T-cell (primary cell): ENCODE measurements at regions of chr4 and their contacts with region 1.

Region 1: GRCh38 chr4:54233277-54233696 is 4.2 kb downstream of the PDGFRA start:
- DNase-seq: peak; percentile 19 to 79 (median 57)
- ATAC-seq: peak; percentile 73 to 87 (median 76)
- H3K4me3 ChIP-seq: peak overlapping the region; percentile 32 to 67
- H3K4me3 Mint-ChIP-seq: peak overlapping the region; percentile 76 to 82 (median 78)
- H3K27ac ChIP-seq: no peak overlapping the region
- H3K27ac Mint-ChIP-seq: no peak overlapping the region
- H3K4me1 ChIP-seq: peaks cover 6 to 40% of the 10 kb centered on the region in 2 experiments
- H3K4me1 Mint-ChIP-seq: peaks cover 25 to 30% (median 30%) of the 10 kb centered on the region in 3 donors
- H3K27me3 ChIP-seq: peaks cover 12 to 65% of the 10 kb centered on the region in 2 experiments
- H3K27me3 Mint-ChIP-seq: peaks cover 45 to 61% of the 10 kb centered on the region in 2 donors

Region 2: GRCh38 chr4:52376132-52376704 is 1857.1 kb before region 1 on chr4:
- CTCF ChIA-PET with region 1: interaction called, 4 to 12 read pairs
- POLR2A ChIA-PET with region 1: no interaction called
- DNase-seq: peak in 6 of 35 experiments; percentile 1 to 49 (median 3)
- ATAC-seq: no peak
- H3K4me3 ChIP-seq: no peak overlapping the region
- H3K4me3 Mint-ChIP-seq: no peak overlapping the region
- H3K27ac ChIP-seq: no peak overlapping the region
- H3K27ac Mint-ChIP-seq: no peak overlapping the region
- H3K4me1 ChIP-seq: no peaks in the 10 kb centered on the region
- H3K4me1 Mint-ChIP-seq: no peaks in the 10 kb centered on the region
- H3K27me3 ChIP-seq: peaks cover 0 to 16% of the 10 kb centered on the region in 2 experiments
- H3K27me3 Mint-ChIP-seq: peaks cover 20 to 23% of the 10 kb centered on the region in 2 donors

Region 3: DNA sequence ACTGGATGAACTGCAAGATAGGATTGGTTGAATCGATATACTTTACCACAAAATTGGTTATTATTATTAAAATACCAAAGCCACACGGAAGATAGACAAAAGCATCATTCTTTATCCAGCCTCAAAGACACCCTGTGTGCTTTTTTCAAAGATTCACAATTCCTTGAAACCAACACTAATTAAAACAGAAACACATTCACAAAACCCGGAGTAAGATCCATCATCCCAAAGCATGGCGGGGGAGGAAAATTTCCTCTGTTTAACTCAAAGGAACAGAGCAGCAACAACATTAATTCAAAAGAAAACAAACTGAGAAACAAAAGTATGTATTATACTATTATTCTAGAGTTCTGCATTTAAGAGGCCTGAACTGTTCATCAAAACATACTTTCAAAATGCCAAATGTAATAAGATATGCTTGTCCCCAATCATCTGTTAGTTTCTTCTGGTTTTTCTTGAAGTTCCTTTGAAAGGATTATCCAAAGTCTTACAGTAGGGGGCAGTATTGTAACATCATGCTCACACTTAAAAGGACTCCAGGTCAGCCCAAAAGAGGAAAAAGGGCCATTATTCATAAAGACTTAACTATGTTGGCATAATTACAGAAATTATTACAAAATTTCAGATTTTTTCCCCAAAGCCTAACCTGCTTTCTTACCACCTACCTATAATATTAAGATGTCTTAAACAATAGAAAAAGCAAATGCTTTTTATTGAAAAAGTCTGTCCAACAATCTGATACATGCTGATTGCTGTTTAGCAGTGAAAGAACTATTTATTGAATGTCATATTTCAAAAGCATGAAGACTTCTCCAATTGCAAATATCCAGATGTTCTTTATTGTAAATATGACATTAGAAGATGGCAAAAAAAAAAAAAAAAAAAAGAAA is 1036.2 kb before region 1 on chr4:
- CTCF ChIA-PET with region 1: interaction called, 12 to 24 read pairs
- POLR2A ChIA-PET with region 1: no interaction called
- DNase-seq: peak in 2 of 35 experiments; percentile 3 to 71
- ATAC-seq: no peak
- H3K4me3 ChIP-seq: no peak overlapping the region
- H3K4me3 Mint-ChIP-seq: no peak overlapping the region
- H3K27ac ChIP-seq: no peak overlapping the region
- H3K27ac Mint-ChIP-seq: no peak overlapping the region
- H3K4me1 ChIP-seq: no peaks in the 10 kb centered on the region
- H3K4me1 Mint-ChIP-seq: no peaks in the 10 kb centered on the region
- H3K27me3 ChIP-seq: no peaks in the 10 kb centered on the region
- H3K27me3 Mint-ChIP-seq: no peaks in the 10 kb centered on the region

Region 4: GRCh38 chr4:53908661-53909078 is 324.6 kb before region 1 on chr4:
- CTCF ChIA-PET with region 1: interaction called, 7 to 15 read pairs
- POLR2A ChIA-PET with region 1: no interaction called
- DNase-seq: peak in 4 of 35 experiments; percentile 2 to 47 (median 8)
- ATAC-seq: peak in 2 of 4 experiments; percentile 35 to 41
- H3K4me3 ChIP-seq: no peak overlapping the region
- H3K4me3 Mint-ChIP-seq: no peak overlapping the region
- H3K27ac ChIP-seq: no peak overlapping the region
- H3K27ac Mint-ChIP-seq: no peak overlapping the region
- H3K4me1 ChIP-seq: peaks cover 0 to 4% of the 10 kb centered on the region in 2 experiments
- H3K4me1 Mint-ChIP-seq: peaks cover 13 to 17% (median 16%) of the 10 kb centered on the region in 3 donors
- H3K27me3 ChIP-seq: peaks cover 3 to 9% of the 10 kb centered on the region in 2 experiments
- H3K27me3 Mint-ChIP-seq: peaks cover 43 to 53% of the 10 kb centered on the region in 2 donors

Region 5: GRCh38 chr4:53929955-53930798 is 303.1 kb before region 1 on chr4:
- CTCF ChIA-PET with region 1: interaction called, 29 to 86 read pairs
- POLR2A ChIA-PET with region 1: no interaction called
- DNase-seq: peak in 34 of 35 experiments; percentile 6 to 77 (median 42)
- ATAC-seq: peak; percentile 50 to 66 (median 62)
- H3K4me3 ChIP-seq: no peak overlapping the region
- H3K4me3 Mint-ChIP-seq: no peak overlapping the region
- H3K27ac ChIP-seq: no peak overlapping the region
- H3K27ac Mint-ChIP-seq: no peak overlapping the region
- H3K4me1 ChIP-seq: no peaks in the 10 kb centered on the region
- H3K4me1 Mint-ChIP-seq: no peaks in the 10 kb centered on the region
- H3K27me3 ChIP-seq: no peaks in the 10 kb centered on the region
- H3K27me3 Mint-ChIP-seq: peaks cover 5 to 10% of the 10 kb centered on the region in 2 donors

Region 6: DNA sequence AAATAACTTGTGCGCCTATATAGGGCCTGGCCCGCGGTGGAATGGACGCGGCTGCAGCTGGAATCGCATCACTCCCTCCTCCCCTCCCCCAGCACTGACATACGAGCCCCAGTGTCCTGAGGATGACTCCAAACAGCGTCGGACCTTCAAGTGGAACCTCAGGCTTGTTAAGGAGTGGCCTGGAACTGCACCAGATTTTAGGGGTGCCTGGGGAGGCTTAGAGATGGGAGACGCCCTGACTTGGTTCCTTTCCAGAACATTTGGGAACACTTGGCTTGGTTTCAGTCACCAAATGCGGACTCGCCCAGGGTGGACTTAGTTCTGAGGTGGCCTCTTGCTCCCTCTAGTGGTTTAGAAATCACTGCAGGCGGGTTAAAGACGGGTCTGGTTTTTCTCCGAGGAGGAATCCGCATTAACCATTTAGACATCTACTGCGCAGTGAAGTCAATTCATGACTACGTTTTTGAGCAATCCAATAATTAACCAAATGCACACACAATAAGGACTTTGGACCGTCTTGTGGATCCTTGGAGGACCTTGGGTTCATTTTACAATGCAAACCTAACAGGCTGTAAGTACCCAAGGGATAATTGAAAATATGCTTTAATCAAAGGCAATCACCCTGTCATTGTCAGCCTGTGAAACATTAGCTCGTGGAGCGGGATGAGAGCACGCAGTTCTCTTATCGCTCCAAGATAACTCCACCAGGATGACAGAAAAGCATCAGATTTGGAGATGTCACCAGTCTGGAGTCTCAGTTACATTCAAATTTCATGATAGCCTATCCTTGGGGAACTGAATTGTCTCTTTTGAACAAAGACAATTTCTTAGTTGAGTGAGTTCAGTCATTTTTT is 15.4 kb before region 1 on chr4:
- CTCF ChIA-PET with region 1: interaction called, 7 to 17 read pairs
- POLR2A ChIA-PET with region 1: no interaction called
- DNase-seq: peak in 31 of 35 experiments; percentile 9 to 78 (median 39)
- ATAC-seq: peak; percentile 60 to 72 (median 66)
- H3K4me3 ChIP-seq: peak overlapping the region in 1 of 2 donors; percentile 39
- H3K4me3 Mint-ChIP-seq: peak overlapping the region in 1 of 3 donors; percentile 5
- H3K27ac ChIP-seq: no peak overlapping the region
- H3K27ac Mint-ChIP-seq: no peak overlapping the region
- H3K4me1 ChIP-seq: peaks cover 0 to 5% of the 10 kb centered on the region in 2 experiments
- H3K4me1 Mint-ChIP-seq: peaks cover 4 to 6% (median 6%) of the 10 kb centered on the region in 3 donors
- H3K27me3 ChIP-seq: peaks cover 10 to 29% of the 10 kb centered on the region in 2 experiments
- H3K27me3 Mint-ChIP-seq: peaks cover 25 to 38% of the 10 kb centered on the region in 2 donors